ENCODE measurements at regions of chr19 and their contacts with region 1.

Region 1: DNA sequence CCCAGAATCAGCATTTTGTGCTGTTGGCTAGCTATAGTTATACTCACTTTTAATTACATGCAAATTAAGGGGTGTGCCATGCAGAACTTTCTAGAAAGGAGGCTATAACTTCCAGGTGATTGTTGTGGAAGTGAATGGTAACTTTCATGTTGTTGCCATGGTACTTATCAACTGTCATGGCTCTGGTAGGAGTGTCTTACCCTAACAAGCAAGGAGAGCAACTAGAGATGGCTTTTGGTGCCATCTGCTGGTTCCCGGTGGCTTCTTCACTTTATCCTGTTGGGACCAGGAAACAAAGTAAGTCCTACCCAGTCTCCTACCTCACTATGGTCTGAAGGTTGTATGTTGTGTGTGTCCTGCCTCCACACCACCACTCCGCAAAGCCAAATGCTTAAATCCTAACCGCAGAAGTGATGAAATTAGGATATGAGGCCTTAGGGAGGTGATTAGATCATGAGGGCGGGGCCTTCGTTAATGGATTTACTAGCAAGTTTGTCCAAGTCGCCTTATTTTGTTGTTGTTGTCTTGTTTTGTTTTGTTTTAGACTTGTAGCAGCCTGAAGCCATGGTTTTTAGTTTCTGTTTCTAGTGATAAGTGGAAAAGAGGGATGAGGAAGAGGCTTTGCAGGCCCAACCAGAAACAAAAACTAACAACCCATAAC is 22.6 kb downstream of the FBXL12 start:
- DNase-seq: peak; percentile 79
- H3K4me3 Mint-ChIP-seq: no peak overlapping the region
- H3K27ac Mint-ChIP-seq: peak overlapping the region; percentile 61
- H3K4me1 Mint-ChIP-seq: peaks cover 25% of the 10 kb centered on the region
- H3K27me3 Mint-ChIP-seq: no peaks in the 10 kb centered on the region

Region 2: DNA sequence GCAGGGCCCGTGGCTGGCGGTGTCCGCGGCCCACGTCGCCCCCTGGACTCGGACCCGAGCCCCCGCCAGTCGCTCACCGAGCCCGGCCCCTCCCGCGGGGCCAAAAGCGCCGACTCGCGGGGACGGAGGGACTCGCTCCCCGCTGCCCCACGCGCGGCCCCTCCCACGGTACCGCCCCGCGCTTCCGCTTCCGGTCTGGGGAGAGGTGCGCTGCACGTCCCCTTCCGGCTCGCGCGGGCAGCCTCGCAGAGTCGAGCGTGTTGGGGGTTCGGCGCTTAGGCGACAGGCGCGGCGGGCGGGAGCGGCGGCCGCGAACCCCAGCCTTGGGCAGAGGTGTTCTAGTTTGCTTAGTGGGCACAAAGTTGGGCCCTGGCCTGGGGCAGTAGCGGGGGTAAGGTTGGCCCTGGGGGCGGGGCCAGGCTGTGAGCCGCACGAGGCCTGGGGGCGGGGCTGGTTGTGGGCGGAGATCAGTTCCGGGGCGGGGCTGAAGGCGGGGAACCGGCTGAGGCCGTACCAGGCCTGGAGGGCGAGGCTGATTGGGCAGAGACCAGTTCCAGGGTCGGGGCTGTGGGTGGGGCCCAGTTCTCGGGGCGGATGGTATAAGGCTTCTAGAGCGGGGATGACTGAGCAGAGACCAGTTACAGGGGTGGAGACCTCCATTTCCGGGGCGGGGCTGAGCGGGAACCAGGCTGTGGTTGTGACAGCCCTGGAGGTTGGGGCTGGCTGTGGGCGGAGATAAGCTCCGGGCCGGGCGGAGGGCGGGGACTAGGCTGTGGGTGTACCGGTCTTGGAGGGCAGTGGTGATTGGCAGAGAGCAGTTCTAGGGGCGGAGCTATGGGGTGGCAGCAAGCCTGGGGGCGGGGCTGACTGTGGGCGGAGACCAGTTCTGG is 963.9 kb before region 1 on chr19 and contains the starts of genes MBD3L1 and ZNF558:
- intact Hi-C with region 1: loop called (anchors 1 kb)
- DNase-seq: peak; percentile 98
- H3K4me3 Mint-ChIP-seq: peak within 1 kb of the TSS; percentile 84
- H3K27ac Mint-ChIP-seq: peak within 1 kb of the TSS; percentile 95
- H3K4me1 Mint-ChIP-seq: peaks cover 20% of the 10 kb centered on the region
- H3K27me3 Mint-ChIP-seq: no peaks in the 10 kb centered on the region
- total RNA-seq, gene MBD3L1: not detected in 2 replicates
- total RNA-seq, gene ZNF558: 18.7 and 23.2 TPM in 2 replicates

Region 3: DNA sequence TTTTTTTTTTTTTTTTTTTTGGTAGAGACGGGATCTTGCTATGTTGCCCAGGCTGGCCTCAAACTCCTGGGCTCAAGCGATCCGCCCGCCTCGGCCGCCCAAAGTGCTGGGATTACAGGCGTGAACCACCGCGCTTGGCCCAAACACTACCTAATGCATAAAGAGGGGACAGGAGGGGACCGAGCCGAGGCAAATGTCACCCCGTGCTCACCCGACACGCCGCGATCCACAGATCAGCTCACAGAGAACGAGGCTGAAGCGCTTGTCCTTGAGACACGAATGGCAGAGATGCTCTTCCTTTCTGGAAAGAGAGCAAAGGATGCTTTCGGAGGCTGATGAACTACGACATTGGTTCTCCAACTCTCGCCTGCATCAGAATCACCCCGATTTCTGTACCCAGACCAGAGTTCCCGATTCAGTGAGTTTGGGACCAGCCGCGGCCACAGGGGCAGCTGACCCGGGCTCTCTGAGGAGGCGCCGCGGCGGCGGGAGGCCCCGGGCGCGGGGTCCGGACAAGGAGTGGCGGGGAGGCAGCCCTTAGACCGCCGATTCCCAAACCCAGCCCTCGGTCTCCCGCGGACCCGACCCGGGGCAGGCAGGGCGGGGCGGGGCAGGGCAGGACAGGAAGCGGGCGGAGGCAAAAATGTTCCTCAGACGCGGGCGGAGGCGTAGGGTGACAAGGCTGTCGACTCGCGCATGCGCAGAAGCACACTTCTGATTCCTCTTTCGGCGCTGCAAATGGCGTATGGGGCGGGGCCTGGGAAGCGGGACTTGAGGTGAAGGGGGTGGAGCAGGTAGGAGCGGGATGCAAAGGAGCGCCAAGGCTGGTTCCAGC is 486.9 kb before region 1 on chr19 and contains the start of gene ZNF699:
- intact Hi-C with region 1: loop called (anchors 1 kb)
- DNase-seq: peak; percentile 98
- H3K4me3 Mint-ChIP-seq: peak within 1 kb of the TSS; percentile 87
- H3K27ac Mint-ChIP-seq: peak within 1 kb of the TSS; percentile 94
- H3K4me1 Mint-ChIP-seq: peaks cover 29% of the 10 kb centered on the region
- H3K27me3 Mint-ChIP-seq: peaks cover 3% of the 10 kb centered on the region
- total RNA-seq, gene ZNF699: 4.7 and 5.0 TPM in 2 replicates

Region 4: DNA sequence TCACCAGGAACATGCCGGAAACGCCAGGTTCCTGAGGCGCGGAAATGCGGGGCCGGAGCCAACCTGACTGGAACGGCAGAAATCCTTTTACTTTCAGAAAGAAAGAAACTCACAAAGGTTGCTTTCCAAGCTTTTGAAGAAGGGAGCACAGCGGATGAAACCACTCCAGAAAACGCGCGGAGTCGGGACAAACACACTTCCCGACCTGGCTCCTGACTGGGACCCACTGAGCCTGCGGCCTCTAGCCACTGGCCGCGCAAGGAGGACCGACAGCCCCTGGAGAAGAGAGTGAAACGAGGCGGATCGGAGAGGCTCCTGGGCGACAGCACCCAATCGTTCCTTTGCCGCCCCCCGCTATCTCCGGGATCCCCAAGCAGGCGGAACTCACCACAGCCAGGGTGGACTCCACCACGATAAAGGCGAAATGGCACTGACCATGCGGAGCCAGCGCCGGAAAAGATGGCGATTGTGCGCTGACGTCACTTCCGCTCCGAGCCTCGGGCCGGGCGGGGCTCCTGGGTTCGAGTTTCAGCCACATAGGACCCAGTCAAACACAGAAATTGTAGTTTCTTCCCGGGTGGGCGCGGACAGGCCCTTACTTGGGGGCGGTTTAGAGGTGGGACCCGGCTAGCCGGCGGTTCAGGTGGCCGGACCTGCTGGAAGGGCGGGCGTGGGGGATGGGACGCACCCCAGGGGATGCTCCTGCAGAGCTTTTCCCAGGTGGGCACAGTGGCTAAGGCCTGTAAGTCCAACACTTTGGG is 212.0 kb before region 1 on chr19 and contains the start of gene ZNF121:
- intact Hi-C with region 1: loop called (anchors 1 kb)
- DNase-seq: peak; percentile 76
- H3K4me3 Mint-ChIP-seq: peak within 1 kb of the TSS; percentile 93
- H3K27ac Mint-ChIP-seq: peak within 1 kb of the TSS; percentile 94
- H3K4me1 Mint-ChIP-seq: peaks cover 24% of the 10 kb centered on the region
- H3K27me3 Mint-ChIP-seq: no peaks in the 10 kb centered on the region
- total RNA-seq, gene ZNF121: 63.4 and 64.8 TPM in 2 replicates

Region 5: GRCh38 chr19:9690746-9691145 is 105.5 kb before region 1 on chr19:
- intact Hi-C with region 1: no loop called
- DNase-seq: no peak
- H3K4me3 Mint-ChIP-seq: no peak overlapping the region
- H3K27ac Mint-ChIP-seq: no peak overlapping the region
- H3K4me1 Mint-ChIP-seq: no peaks in the 10 kb centered on the region
- H3K27me3 Mint-ChIP-seq: no peaks in the 10 kb centered on the region

Region 6: GRCh38 chr19:9741476-9742171 is 54.6 kb before region 1 on chr19:
- intact Hi-C with region 1: no loop called
- DNase-seq: no peak
- H3K4me3 Mint-ChIP-seq: no peak overlapping the region
- H3K27ac Mint-ChIP-seq: no peak overlapping the region
- H3K4me1 Mint-ChIP-seq: no peaks in the 10 kb centered on the region
- H3K27me3 Mint-ChIP-seq: no peaks in the 10 kb centered on the region

Region 7: GRCh38 chr19:9768175-9769112 is 27.8 kb before region 1 on chr19 and contains the start of gene ZNF846:
- intact Hi-C with region 1: loop called (anchors 1 kb)
- DNase-seq: peak; percentile 90
- H3K4me3 Mint-ChIP-seq: peak within 1 kb of the TSS; percentile 92
- H3K27ac Mint-ChIP-seq: peak within 1 kb of the TSS; percentile 98
- H3K4me1 Mint-ChIP-seq: peaks cover 4% of the 10 kb centered on the region
- H3K27me3 Mint-ChIP-seq: peaks cover 2% of the 10 kb centered on the region
- total RNA-seq, gene ZNF846: 2.3 and 2.4 TPM in 2 replicates

Region 8: GRCh38 chr19:9834726-9835506 is 38.7 kb after region 1 on chr19 and contains the start of gene PIN1:
- intact Hi-C with region 1: loop called (anchors 1 kb)
- DNase-seq: peak; percentile 99
- H3K4me3 Mint-ChIP-seq: peak within 1 kb of the TSS; percentile 97
- H3K27ac Mint-ChIP-seq: peak within 1 kb of the TSS; percentile 90
- H3K4me1 Mint-ChIP-seq: peaks cover 10% of the 10 kb centered on the region
- H3K27me3 Mint-ChIP-seq: no peaks in the 10 kb centered on the region
- total RNA-seq, gene PIN1: 86.4 and 87.3 TPM in 2 replicates

Region 9: DNA sequence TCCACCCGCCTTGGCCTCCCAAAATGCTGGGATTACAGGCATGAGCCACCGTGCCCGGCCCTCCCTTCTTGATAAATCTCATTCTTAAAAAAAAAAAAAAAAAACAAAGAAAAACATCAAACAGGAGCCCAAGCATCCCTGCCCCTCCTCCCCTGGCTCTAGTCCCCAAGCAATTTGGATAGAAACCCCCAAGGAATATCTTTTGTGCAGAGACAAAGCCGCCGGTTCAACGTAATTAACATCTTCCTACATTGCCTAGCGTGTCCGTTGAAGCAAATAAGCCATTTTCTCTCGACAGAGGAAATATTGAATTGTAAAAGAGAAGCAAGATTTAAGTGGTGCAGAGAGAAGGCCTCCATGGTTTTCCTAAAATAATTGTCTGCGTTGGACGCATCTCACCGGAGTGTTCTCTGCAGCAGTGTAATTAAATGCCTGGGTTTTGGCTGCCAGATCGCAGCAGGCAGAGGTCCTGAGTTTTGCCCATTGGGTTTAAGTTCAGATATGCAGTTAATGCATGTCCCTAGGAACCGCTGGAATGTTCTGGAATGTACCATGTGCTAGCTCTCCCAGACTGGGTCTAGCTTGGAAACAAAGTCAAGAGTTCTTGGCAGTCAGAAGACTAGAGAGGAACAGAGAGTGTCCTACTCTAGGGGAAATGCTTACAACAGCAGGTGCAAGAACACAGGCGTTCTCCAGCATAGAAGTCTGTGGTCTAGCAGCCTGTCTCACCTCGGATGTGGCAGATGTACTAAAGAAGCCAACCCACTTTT is 69.7 kb after region 1 on chr19:
- intact Hi-C with region 1: no loop called
- DNase-seq: peak; percentile 47
- H3K4me3 Mint-ChIP-seq: peak overlapping the region; percentile 26
- H3K27ac Mint-ChIP-seq: no peak overlapping the region
- H3K4me1 Mint-ChIP-seq: peaks cover 52% of the 10 kb centered on the region
- H3K27me3 Mint-ChIP-seq: peaks cover 3% of the 10 kb centered on the region

Region 10: DNA sequence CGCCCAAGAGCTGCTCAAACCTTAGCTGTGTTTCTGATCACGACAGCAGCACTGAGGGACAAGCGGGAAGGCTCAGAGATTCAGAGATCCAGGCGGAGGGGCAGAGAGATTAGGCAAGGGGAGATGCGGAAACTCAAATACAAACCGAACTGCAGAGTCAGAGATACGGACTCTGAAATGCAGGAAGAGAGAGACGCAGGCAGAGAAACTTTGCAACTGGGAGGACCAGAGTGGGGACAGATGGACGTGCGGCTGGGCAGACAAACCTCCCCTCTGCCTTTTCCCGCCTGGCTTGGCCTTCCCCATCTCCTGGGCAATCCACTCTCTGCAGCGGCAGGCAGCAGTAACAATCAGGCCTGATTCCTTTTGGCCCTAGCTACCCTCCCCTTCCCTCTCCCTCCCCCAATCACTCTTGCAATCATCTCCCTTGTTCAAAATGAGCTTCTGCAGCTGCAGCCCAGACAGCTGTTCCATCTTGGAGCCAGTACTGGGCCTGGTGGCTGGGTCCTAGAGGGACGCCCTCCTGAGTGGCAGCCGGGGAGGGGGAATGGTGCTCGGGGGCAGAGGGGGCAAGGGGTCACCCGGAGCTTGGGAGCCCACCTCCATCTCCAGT is 110.3 kb after region 1 on chr19:
- intact Hi-C with region 1: no loop called
- DNase-seq: no peak
- H3K4me3 Mint-ChIP-seq: no peak overlapping the region
- H3K27ac Mint-ChIP-seq: no peak overlapping the region
- H3K4me1 Mint-ChIP-seq: no peaks in the 10 kb centered on the region
- H3K27me3 Mint-ChIP-seq: peaks cover 3% of the 10 kb centered on the region